ENCODE measurements at regions of chr3 and their contacts with region 1.

Region 1: DNA sequence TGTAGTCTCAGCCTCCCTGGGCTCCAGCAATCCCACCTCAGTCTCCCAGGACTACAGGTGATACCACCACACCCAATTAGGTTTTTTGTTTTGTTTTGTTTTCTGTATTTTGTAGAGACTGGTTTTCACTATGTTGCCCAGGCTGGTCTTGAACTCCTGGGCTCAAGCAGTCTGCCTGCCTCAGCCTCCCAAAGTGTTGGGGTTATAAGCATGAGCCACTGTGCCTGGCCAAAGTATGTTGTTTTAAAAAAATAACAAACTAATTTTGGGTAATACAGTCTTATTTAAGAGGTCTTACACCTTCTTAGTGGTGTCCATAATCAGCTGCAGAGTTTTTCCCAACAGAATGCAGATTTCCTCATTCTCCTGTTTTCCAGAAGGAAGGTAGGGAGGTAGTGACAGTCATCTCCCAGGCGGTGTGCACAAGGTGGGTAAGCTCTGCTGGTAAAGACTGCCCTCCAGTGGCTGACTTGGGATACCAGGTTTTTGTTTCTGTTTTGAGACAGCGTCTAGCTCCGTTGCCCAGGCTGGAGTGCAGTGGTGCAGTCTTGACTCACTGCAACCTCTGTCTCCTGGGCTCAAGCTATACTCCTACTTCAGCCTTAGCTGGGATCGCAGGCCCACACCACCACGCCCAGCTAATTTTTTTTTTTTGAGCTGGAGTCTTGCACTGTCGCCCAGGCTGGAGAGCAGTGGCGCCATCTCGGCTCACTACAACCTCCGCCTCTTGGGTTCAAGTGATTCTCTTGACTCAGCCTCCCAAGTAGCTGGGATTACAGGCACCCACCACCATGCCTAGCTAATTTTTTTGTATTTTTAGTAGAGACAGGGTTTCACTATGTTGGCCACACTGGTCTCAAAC is 58.4 kb downstream of the MAP6D1 start:
- DNase-seq: peak; percentile 55 to 74
- ATAC-seq: peak; percentile 82 to 94 (median 91)
- H3K4me3 ChIP-seq: no peak overlapping the region
- H3K27ac ChIP-seq: no peak overlapping the region
- H3K4me1 ChIP-seq: peaks cover 4% of the 10 kb centered on the region
- H3K27me3 ChIP-seq: no peaks in the 10 kb centered on the region
- CTCF ChIP-seq: peak; percentile 81

Region 2: DNA sequence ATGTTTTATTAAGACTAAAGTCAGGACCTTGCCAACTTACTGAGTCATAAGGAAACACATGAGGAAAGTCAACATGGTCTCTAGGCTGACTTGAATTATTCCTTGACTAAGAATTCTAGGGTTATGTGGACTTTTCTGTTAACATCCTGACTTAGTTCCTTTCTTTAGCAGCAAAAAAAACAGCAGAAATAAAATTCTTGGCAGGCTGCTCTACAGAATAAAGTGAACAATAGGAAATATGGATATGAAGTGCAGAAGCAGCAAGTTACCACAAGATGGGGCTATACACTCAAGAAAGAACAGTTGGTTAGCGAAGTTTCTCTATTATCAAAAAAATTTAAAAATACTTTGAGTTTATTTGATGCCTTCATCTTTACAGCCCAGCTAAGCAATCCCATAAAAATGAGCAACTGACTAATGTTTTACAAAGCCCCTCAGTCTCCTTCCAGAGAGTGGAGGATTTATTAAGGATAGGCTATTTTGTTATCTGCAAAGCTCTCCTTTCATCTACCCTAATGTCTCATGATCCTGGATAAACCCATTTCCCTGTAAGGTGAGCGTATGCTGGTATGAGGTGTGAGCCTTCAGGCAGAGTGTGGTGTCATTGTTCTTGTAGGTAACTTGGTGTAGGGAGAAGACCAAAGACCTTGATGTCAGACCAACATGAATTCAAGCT is 644.6 kb before region 1 on chr3:
- intact Hi-C with region 1: loop called in 1 of 2 experiments (anchors 5 kb)
- DNase-seq: no peak
- ATAC-seq: peak in 3 of 4 donors; percentile 52 to 78 (median 63)
- H3K4me3 ChIP-seq: no peak overlapping the region
- H3K27ac ChIP-seq: no peak overlapping the region
- H3K4me1 ChIP-seq: no peaks in the 10 kb centered on the region
- H3K27me3 ChIP-seq: peaks cover 0 to 11% (median under 1%) of the 10 kb centered on the region in 3 donors
- CTCF ChIP-seq: peak; percentile 84

Region 3: DNA sequence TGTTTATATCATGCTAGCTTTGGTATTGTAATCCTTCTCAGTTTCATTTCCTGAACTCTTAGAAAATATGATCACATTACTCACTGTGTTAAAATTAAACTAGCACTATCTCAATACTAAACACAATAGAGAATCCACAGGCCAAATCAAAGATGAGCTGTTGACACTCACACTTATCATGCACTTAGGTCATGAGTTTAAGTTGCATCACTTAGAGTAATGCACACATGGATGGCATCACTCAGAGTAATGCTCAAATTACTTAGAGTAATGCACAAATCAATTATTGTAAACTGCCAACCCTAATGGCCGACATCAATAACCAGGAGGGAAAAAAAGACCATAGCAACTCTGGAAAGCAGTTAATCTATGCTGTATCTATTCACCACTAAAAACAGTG is 298.6 kb before region 1 on chr3:
- intact Hi-C with region 1: loop called (anchors 2 kb)
- DNase-seq: no peak
- ATAC-seq: peak in 3 of 4 donors; percentile 19 to 34 (median 20)
- H3K4me3 ChIP-seq: no peak overlapping the region
- H3K27ac ChIP-seq: no peak overlapping the region
- H3K4me1 ChIP-seq: no peaks in the 10 kb centered on the region
- H3K27me3 ChIP-seq: no peaks in the 10 kb centered on the region
- CTCF ChIP-seq: no peak

Region 4: DNA sequence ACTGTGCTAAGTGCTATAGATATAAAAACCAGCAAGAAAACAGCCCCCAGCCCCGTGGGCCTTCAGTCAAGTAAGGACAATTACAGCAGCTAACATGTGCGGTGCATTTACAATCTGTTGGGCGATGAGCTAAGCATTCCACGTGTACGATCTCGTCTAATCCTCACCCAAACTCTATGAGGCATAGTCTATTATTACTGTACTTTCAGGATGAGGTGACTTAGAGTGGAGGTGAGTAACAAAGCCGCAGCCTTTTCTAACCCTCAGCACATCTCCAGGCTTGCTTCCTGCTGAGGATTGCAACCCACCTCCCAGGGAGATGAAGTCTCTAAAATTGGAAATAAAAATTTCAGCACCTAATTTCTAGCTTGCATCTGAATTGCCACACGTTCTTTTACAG is 285.4 kb before region 1 on chr3:
- intact Hi-C with region 1: loop called in 1 of 2 experiments (anchors 5 kb)
- DNase-seq: no peak
- ATAC-seq: peak; percentile 39 to 73 (median 64)
- H3K4me3 ChIP-seq: no peak overlapping the region
- H3K27ac ChIP-seq: peak overlapping the region; percentile 23
- H3K4me1 ChIP-seq: peaks cover 16% of the 10 kb centered on the region
- H3K27me3 ChIP-seq: no peaks in the 10 kb centered on the region
- CTCF ChIP-seq: no peak

Region 5: GRCh38 chr3:183502237-183503181 is 264.5 kb before region 1 on chr3:
- intact Hi-C with region 1: loop called (anchors 2 to 10 kb)
- DNase-seq: no peak
- ATAC-seq: peak; percentile 74 to 96 (median 89)
- H3K4me3 ChIP-seq: no peak overlapping the region
- H3K27ac ChIP-seq: no peak overlapping the region
- H3K4me1 ChIP-seq: peaks cover 9% of the 10 kb centered on the region
- H3K27me3 ChIP-seq: no peaks in the 10 kb centered on the region
- CTCF ChIP-seq: peak; percentile 52

Region 6: DNA sequence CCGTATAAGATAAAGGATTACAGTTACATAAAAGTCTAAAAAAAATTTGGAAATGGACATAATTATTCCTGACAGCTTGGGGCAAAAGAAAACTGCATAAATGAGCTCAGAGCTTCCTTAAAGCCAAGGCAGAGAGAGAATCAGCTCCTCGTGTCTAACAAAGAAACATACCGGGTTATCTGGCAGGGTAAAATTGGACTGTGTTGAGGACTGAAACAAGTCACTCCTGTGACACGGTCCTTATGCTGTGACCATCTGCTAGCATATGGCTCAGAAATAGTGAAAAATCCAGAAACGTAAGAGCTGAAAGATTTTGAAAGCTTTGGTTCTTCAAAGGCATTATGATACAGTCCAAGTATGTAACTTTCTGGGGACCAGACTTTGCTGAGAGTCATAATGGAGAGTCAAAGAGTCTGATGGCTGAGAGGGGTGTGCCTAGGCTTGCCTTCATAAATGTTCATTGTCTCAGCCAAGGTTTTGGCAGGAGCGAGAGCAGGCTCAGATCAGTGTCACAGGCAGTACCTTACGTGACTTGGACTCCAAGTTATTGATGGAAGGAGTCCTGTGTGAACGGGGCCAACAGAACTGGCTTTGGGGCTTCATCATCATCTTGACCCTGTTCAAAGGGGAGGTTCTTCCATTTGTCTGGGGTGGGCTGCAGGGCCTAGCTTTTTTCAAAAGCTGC is 45.9 kb after region 1 on chr3:
- intact Hi-C with region 1: no loop called
- DNase-seq: no peak
- ATAC-seq: peak in 3 of 4 donors; percentile 31 to 82 (median 45)
- H3K4me3 ChIP-seq: no peak overlapping the region
- H3K27ac ChIP-seq: peak overlapping the region; percentile 72
- H3K4me1 ChIP-seq: peaks cover 6% of the 10 kb centered on the region
- H3K27me3 ChIP-seq: no peaks in the 10 kb centered on the region
- CTCF ChIP-seq: no peak